Activated CD4-positive, alpha-beta T cell treated with anti-CD3 and anti-CD28 coated beads for 36 hours (primary cell): ENCODE measurements at regions of chr19 and their contacts with region 1.

Region 1: DNA sequence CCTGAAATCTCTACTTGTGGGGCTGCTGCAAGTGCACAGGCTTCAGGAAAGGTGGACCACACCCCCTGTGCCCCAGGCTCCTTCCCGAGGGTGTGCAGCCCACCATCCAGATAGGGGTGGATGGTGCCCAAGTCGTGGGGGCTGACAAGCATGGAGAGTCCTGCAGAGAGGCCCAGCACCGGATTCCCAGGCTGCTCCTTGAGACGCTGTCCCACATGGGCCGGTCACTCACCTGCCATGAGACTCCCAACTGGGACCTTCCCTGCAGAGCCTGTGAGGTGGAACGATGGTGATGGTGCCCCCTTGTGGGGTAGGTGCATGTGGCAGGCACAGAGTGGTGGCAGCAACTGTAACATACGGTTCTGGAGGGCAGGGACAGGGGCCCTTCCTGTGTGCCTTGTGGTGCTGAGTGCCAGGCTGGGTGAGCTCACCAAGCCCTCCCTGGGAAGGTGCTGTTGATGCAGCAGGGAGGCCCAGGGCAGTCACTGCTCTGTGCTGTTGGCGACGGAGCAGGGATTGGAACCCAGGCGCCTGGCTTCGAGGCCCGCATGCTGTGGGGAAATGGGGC is 33.0 kb downstream of the PPP1R37 start:
- DNase-seq: peak; percentile 87
- ATAC-seq: peak; percentile 85
- H3K4me3 Mint-ChIP-seq: no peak overlapping the region
- H3K27ac Mint-ChIP-seq: no peak overlapping the region
- H3K4me1 Mint-ChIP-seq: peaks cover 24% of the 10 kb centered on the region
- H3K27me3 Mint-ChIP-seq: no peaks in the 10 kb centered on the region

Region 2: GRCh38 chr19:44988896-44989556 is 137.0 kb before region 1 on chr19:
- CTCF ChIA-PET with region 1: no interaction called
- POLR2A ChIA-PET with region 1: interaction called, 3 read pairs
- intact Hi-C with region 1: loop called in 1 of 2 experiments (anchors 1 kb)
- DNase-seq: peak; percentile 82
- ATAC-seq: peak; percentile 89
- H3K4me3 Mint-ChIP-seq: no peak overlapping the region
- H3K27ac Mint-ChIP-seq: no peak overlapping the region
- H3K4me1 Mint-ChIP-seq: no peaks in the 10 kb centered on the region
- H3K27me3 Mint-ChIP-seq: no peaks in the 10 kb centered on the region